ENCODE measurements at regions of chr6 and their contacts with region 1.

Region 1: DNA sequence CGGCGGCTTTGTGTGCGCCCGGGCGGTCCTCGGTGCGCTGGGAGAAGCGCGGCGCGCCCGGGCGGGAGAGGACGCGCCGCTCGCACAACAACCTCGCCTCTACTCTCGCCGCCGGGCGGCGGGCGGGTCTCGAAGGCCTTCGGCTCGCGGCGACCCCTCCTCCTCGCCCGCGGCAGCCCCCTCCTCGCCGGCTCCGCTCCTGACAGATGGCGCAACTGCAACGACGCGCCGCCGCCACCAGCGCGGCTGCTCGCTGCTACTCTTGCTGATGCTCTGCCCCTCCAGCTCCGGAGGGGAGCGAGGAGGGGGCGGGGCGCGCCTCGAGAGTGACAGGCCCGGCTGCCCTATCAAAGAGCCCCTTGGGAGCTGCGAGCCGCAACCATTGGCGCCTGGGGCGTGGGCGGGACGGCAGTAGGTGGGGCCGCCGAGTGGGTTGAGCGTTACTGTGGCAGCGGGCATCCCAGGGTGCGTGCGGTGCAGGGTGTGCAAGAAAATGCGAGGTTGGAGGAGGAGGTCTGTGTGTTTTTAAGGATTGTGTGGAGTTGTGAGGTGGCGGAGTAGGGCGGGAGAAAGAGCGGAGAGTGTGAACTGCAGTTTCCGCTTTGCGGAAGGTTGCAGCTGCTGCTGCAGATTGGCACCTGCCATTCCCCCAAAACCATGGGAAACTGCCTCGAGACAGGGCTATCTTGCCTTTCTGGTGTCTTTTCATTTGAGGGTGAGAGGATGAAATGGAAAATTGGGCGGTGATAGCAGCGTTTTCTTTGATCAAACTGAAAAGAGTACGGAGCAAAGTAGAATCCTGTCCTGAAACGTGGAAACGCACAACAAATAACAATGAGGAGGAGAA is at the start of gene FYN:
- DNase-seq: peak; percentile 99
- H3K4me3 Mint-ChIP-seq: peak within 1 kb of the TSS; percentile 96
- H3K27ac Mint-ChIP-seq: peak within 1 kb of the TSS; percentile 93
- H3K4me1 Mint-ChIP-seq: peaks cover 41% of the 10 kb centered on the region
- H3K27me3 Mint-ChIP-seq: no peaks in the 10 kb centered on the region
- total RNA-seq, gene FYN: 201 to 208 TPM

Region 2: GRCh38 chr6:111841822-111842221 is 31.6 kb before region 1 on chr6:
- CTCF ChIA-PET with region 1: interaction called, 17 read pairs
- POLR2A ChIA-PET with region 1: interaction called, 25 read pairs
- DNase-seq: peak; percentile 77
- H3K4me3 Mint-ChIP-seq: no peak overlapping the region
- H3K27ac Mint-ChIP-seq: no peak overlapping the region
- H3K4me1 Mint-ChIP-seq: peaks cover 36% of the 10 kb centered on the region
- H3K27me3 Mint-ChIP-seq: no peaks in the 10 kb centered on the region

Region 3: DNA sequence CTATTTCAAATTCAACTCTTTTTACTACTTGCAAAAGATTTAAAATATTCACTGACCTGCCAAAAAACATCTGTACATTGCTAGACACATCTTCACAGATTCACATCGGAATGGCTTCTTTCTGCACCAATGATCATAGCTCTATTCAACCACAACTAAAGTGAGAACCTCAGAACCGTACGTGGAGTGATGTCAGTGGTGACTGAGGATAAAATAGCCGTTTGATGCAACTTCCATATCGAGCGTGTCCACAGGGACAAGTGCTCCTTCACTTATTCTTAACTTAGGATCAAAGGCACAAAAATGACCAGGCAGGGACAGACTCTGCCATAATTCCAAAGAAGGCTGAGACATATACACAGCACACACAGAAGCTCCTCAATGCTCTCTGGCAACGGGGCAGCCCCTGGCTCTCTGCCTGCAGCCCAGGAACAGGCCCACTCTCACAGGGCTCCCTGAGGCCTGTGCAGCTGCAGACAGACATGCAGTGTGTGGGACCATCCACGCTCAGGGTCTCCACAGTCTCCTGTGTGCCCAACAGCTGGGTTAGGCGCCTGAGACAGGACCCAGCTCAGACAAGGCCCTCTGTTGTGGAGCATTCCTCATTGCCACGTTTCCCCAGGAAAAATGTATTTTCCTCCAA is 23.0 kb before region 1 on chr6:
- CTCF ChIA-PET with region 1: interaction called, 17 read pairs
- POLR2A ChIA-PET with region 1: interaction called, 25 read pairs
- DNase-seq: no peak
- H3K4me3 Mint-ChIP-seq: no peak overlapping the region
- H3K27ac Mint-ChIP-seq: peak overlapping the region; percentile 1
- H3K4me1 Mint-ChIP-seq: peaks cover 51% of the 10 kb centered on the region
- H3K27me3 Mint-ChIP-seq: no peaks in the 10 kb centered on the region

Region 4: DNA sequence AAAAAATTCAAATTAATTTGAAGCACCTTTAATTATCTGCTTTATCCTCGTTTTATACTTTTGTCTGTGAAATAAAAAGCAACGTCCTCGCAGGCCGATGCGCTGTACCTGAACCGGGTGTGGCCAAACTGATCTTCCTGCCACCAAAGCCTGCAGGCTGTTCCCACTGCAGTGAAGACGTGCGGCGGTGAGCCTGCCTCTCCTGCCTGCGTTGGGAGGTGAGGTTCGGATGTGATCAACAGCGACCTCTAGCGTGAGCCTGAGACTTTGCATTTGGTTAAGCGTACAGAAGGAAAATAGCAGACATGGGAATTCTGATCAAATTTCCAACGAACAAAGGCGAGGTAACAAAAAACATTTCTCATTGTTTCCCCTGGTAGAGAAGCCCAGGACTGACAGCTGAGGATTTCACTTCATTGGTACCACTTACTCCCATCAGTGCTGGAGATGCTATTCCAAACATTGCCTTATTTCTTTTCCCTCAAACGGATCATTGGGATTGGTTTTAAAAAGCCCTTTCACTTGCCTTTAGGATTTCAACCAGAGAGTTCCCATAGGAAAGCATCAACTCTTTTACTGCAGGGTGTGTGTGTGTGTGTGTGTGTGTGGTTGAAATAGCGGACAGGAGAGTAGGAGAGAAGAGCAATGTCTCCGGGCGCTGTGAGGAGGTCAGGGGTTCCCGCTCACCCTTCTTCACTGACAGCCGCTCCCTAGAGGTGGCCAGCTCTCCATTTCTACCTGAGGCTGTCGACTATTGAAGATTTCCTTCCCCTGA is 123.9 kb after region 1 on chr6:
- CTCF ChIA-PET with region 1: interaction called, 17 read pairs
- POLR2A ChIA-PET with region 1: interaction called, 14 read pairs
- DNase-seq: peak; percentile 82
- H3K4me3 Mint-ChIP-seq: no peak overlapping the region
- H3K27ac Mint-ChIP-seq: no peak overlapping the region
- H3K4me1 Mint-ChIP-seq: peaks cover 40% of the 10 kb centered on the region
- H3K27me3 Mint-ChIP-seq: no peaks in the 10 kb centered on the region